Mammary epithelial cell (primary cell): ENCODE measurements at regions of chr11 and their contacts with region 1.

Region 1: DNA sequence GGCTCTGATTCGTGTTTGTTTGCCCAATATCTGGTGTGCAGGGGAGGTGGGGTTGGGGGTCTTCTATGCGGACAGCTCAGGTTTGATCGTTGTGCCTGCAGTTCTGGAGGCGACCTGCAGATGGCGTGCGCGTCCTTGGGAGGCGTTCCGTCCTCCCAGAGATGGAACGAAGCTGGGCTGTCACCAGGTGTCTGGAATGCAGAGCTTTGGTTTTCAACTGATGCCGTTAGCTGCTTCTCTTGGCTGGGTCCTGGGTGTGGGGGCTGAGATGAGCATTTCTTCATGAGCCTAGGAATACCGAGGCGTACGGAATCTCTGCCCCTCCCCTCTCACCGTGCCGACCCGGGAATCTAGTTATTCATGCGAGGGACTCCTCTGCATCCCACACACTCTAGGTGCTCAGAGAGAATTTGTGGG is 98.6 kb downstream of the CEP164 start:
- DNase-seq: peak; percentile 24
- H3K4me3 ChIP-seq: no peak overlapping the region
- H3K27ac ChIP-seq: no peak overlapping the region
- H3K4me1 ChIP-seq: no peaks in the 10 kb centered on the region
- H3K27me3 ChIP-seq: peaks cover 4% of the 10 kb centered on the region
- CTCF ChIP-seq: peak; percentile 95 to 99

Region 2: GRCh38 chr11:117356126-117356773 is 70.0 kb before region 1 on chr11:
- CTCF ChIA-PET with region 1: no interaction called
- dilution Hi-C with region 1: no loop called
- in situ Hi-C with region 1: no loop called
- intact Hi-C with region 1: no loop called
- DNase-seq: no peak
- H3K4me3 ChIP-seq: no peak overlapping the region
- H3K27ac ChIP-seq: no peak overlapping the region
- H3K4me1 ChIP-seq: no peaks in the 10 kb centered on the region
- H3K27me3 ChIP-seq: no peaks in the 10 kb centered on the region
- CTCF ChIP-seq: no peak

Region 3: DNA sequence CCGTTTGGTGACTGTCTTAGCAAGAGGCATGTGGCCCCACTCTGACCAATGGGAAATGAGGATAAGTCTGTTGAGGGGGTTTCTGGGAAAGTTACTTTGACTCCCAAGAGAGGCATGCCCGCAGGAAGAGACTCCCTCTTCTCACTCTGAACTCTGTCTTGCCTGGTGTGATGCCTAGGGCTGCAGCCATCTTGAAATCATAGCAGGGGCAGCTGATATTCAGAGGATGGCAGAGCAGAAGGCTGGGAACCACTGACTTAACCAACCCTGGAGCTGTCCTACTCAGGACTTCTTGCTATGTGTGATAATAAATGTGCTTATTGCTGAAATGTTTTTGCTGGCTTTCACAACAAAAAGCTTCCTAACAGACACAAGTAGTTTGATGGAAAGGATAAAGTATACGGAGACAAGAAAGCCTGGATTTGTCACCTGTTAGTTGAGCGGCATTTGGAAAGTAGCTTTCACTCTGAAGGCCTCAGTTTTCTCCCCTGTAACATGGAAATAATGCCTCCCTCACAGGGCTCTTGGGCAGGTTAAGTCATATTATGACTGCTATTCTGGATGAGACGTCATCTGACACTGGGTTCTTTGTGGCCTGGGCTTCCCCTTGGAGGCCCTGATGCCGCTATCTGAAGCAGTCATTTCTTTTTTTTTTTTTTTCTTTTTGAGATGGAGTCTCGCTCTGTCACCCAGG is 29.9 kb after region 1 on chr11:
- CTCF ChIA-PET with region 1: no interaction called
- dilution Hi-C with region 1: loop called (anchors 5 kb)
- in situ Hi-C with region 1: no loop called
- intact Hi-C with region 1: no loop called
- DNase-seq: no peak
- H3K4me3 ChIP-seq: no peak overlapping the region
- H3K27ac ChIP-seq: no peak overlapping the region
- H3K4me1 ChIP-seq: peaks cover 10% of the 10 kb centered on the region
- H3K27me3 ChIP-seq: no peaks in the 10 kb centered on the region
- CTCF ChIP-seq: no peak

Region 4: DNA sequence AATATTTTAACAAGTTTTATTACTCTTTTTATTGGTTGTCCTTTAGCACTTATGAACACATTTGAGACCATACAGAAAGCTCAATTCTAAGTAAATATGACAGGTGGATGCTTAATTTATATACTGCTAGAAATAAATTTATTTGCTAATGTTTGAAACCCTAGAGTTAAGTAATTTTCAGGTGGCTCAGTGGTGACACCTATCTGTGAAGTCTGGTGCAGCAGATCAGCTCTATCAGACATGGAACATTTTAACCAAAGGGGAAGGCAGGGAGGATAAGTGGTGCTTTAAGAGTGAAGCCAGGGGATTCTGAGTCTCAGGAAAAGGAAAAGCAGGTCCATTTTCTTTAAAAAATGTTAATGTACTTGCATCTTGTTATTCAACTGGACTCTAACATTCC is 194.9 kb after region 1 on chr11:
- CTCF ChIA-PET with region 1: interaction called, 5 read pairs
- dilution Hi-C with region 1: no loop called
- in situ Hi-C with region 1: no loop called
- intact Hi-C with region 1: loop called (anchors 1 kb)
- DNase-seq: no peak
- H3K4me3 ChIP-seq: no peak overlapping the region
- H3K27ac ChIP-seq: no peak overlapping the region
- H3K4me1 ChIP-seq: no peaks in the 10 kb centered on the region
- H3K27me3 ChIP-seq: no peaks in the 10 kb centered on the region
- CTCF ChIP-seq: peak; percentile 52 to 64

Region 5: DNA sequence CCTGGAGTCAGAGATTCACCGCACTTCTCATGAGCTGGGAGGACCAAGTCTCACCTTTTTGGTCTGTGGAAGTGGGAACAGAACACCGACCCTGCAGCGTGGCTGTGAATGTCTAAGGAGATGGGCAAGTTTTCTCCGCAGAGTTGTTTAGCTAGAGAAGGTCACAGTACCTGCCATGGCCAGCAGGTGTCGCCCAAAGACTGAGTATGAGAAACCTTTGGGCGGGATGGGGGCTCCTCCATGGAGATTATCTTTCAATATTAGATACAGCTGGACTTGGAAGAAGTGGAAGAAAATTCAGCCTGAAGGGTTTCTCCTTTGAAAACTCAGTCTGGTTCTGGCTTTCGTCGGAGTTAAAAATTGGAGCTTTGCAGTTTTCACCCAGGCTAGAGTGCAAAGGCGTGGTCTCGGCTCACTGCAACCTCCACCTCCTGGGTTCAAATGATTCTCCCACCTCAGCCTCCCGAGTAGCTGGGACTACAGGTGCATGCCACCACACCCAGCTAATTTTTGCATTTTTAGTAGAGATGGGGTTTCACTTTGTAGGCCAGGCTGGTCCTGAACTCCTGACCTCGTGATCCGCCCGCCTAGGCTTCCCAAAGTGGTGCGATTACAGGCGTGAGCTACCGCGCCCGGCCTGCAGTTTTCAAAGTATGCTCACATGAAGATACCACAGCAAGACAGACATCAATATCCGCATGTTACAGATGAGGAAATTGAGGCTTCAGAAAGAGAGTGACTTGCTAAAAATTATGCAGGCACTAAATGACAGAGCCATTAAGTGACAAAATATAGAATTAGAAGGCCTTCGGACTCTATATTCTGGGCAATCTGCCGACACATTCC is 381.4 kb after region 1 on chr11:
- CTCF ChIA-PET with region 1: interaction called, 22 read pairs
- dilution Hi-C with region 1: no loop called
- in situ Hi-C with region 1: loop called (anchors 5 kb)
- intact Hi-C with region 1: loop called (anchors 1 kb)
- DNase-seq: no peak
- H3K4me3 ChIP-seq: no peak overlapping the region
- H3K27ac ChIP-seq: no peak overlapping the region
- H3K4me1 ChIP-seq: peaks cover 8% of the 10 kb centered on the region
- H3K27me3 ChIP-seq: no peaks in the 10 kb centered on the region
- CTCF ChIP-seq: peak; percentile 93

Region 6: GRCh38 chr11:117946842-117947526 is 520.7 kb after region 1 on chr11:
- CTCF ChIA-PET with region 1: interaction called, 3 read pairs
- dilution Hi-C with region 1: no loop called
- in situ Hi-C with region 1: loop called (anchors 10 to 25 kb)
- intact Hi-C with region 1: loop called (anchors 1 kb)
- DNase-seq: peak; percentile 90
- H3K4me3 ChIP-seq: no peak overlapping the region
- H3K27ac ChIP-seq: no peak overlapping the region
- H3K4me1 ChIP-seq: peaks cover 7% of the 10 kb centered on the region
- H3K27me3 ChIP-seq: no peaks in the 10 kb centered on the region
- CTCF ChIP-seq: peak; percentile 92 to 98